ENCODE measurements at regions of chr5 and their contacts with region 1.

Region 1: DNA sequence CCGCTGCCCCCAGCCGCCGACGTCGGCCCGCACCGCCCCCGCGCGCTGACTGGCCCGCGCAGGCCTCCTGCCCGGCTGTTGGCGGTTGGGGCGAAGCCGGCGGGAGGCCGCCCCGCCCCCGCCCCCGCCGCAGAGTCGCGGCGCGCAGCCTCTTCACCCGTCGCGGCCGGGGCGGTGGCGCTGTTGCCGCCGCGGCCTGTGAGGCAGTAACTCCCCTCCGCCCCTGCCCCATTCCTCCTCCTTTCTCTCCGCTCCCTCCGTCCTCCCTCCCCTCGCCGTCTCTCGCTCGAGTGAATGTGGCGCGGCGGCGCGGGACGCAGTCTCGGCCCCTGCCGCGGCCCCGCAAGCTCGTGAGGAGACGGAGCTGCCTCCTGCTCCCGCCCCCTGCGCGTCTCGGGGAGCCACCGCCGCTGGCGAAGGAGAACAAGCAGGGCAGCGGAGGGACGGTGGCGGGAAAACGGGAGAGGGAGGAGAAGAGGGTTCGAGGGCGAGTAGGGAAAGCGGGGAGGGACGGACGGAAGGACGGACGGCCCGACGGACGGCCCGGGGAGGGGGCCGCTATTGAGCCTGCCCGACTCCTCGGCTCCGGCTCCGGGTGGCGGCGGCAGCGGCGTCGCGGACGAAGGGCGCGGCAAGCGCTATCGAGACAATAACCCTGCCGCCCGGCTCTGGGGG is 637 bp upstream of the ERBIN start:
- DNase-seq: peak; percentile 83 to 89 (median 86)
- H3K4me3 ChIP-seq: peak overlapping the region; percentile 62
- H3K27ac ChIP-seq: peak overlapping the region; percentile 97 to 99
- H3K4me1 ChIP-seq: no peaks in the 10 kb centered on the region
- H3K27me3 ChIP-seq: no peaks in the 10 kb centered on the region
- CTCF ChIP-seq: peak in 2 of 3 donors; percentile 57 to 68
- EP300 ChIP-seq: no peak
- POLR2A ChIP-seq: peak; percentile 78

Region 2: GRCh38 chr5:66144074-66144833 is 218.5 kb after region 1 on chr5 and contains the start of gene SREK1:
- intact Hi-C with region 1: loop called (anchors 5 to 10 kb)
- DNase-seq: peak; percentile 91 to 96 (median 93)
- H3K4me3 ChIP-seq: peak within 1 kb of the TSS; percentile 75
- H3K27ac ChIP-seq: peak within 1 kb of the TSS; percentile 99
- H3K4me1 ChIP-seq: peaks cover 6% of the 10 kb centered on the region
- H3K27me3 ChIP-seq: no peaks in the 10 kb centered on the region
- CTCF ChIP-seq: no peak
- EP300 ChIP-seq: no peak
- POLR2A ChIP-seq: peak; percentile 90
- total RNA-seq, gene SREK1: 50.4 to 101 (median 63.1) TPM